ENCODE measurements at regions of chr1 and their contacts with region 1.

Region 1: DNA sequence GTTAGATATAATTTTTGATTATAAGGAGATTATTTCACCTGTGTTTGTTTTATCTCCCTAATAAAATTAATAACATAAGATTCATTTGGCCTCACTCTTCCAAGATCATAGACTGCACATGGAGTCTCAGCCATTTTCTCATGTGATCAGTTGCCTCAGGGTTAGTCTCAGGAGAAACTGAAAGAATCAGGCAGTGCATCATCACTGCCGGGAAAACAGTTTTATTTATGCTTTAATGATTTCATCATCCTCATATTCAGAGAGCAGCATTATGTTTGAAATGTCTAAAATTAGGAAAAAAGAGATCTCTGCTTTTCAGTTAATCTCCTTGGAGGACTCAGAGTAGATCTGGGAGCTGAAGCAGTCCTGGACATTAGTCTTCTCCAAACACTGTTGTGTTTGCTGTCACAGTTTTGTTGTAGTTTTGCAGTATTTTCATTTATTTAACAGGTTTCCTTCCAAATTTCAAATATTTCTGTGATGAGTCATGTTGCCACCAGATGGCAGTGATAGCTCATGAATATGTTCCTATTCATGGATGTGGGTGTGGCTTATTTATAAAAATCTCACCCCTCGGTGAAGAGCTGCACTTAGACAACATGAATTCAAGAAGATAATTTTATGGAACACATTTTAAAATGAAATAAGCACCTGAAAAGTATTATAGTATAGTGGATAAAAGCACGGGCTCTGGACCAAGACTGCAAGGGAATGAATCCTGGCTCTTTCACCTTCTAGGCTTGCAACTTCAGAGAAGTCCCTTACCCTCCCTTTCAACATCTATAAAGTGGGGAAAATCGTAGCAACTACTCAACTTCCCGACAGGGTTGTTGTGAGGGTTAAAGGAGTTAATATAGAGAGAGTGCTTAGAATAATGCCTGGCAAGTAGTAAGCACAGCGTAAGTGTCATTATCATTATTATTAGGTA is 31.2 kb downstream of the CHD1L start:
- DNase-seq: no peak
- H3K4me3 ChIP-seq: no peak overlapping the region
- H3K27ac ChIP-seq: peak overlapping the region; percentile 48
- H3K4me1 ChIP-seq: peaks cover 7% of the 10 kb centered on the region
- H3K27me3 ChIP-seq: no peaks in the 10 kb centered on the region
- CTCF ChIP-seq: peak; percentile 73

Region 2: DNA sequence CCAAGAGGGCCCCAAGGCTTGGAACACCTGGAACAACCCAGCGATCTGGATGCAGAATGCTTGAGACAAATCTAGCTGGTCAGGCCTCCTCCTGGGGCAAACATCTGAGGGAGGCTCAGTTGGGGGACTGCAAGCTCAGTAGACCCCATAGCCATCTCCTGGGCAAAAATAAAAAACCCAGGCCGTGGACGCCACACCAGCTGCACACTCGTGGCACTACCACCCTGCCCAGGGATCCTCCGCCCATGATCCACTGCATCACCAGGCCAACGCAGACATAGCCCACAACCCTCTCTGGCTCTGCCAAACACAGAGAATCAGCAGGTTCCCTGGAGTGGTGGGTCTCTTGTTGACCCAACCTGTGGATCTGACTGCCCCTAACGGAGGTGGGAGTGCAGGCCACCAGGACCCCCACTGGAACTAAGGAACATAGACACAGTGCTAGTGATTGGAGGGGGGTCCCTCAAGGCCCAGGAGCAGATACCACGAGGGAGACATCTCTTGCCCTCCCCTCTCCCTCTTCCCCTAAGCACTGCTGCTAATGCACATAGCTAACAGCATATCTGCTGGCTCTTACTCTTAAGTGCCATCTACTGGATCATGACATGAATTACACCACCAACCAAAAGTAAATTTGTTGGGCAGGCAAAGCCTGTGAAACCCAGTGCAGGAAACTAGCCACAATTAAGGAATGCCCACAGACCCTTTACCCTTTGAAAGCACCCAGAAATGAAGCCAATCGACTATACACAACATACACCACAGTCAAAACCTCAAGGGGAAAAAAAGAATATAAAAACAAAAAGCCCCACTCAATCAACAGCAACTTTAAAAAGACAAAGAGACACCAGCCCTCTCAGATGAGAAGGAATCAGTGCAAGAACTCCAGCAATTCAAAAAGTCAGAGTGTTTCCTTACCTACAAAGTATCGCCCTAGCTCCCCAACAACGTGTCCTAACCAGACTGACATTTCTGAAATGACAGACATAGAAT is 116.2 kb after region 1 on chr1:
- intact Hi-C with region 1: loop called (anchors 10 kb)
- DNase-seq: no peak
- H3K4me3 ChIP-seq: no peak overlapping the region
- H3K27ac ChIP-seq: no peak overlapping the region
- H3K4me1 ChIP-seq: no peaks in the 10 kb centered on the region
- H3K27me3 ChIP-seq: peaks cover 9% of the 10 kb centered on the region
- CTCF ChIP-seq: peak; percentile 71

Measured in left ventricle myocardium inferior (tissue), 1 donor.